ENCODE measurements at regions of chr4 and their contacts with region 1.

Region 1: DNA sequence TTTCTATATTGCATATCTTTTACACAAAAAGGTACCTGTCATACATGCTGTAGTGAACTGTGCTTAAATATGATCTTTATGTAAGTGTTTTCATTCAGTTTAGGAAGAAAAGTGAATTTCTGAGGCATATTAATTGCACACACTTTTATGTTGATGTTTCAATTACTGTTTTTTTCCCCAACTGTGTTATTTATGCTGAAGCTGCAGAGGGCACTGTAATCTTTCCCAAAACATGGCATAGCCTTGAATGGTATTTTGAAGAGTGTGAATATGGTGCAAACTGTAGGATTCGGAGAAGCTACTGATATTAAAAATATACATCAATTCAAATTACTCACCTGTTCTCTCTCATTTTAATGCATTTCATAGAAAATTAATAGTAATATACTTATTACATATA is 6.0 kb upstream of the CENPE start:
- DNase-seq: no peak
- ATAC-seq: no peak; the same call in 1 of the 2 replicates
- H3K4me3 ChIP-seq: no peak overlapping the region
- H3K27ac ChIP-seq: no peak overlapping the region
- H3K4me1 ChIP-seq: no peaks in the 10 kb centered on the region
- H3K27me3 ChIP-seq: peaks cover 4% of the 10 kb centered on the region; the same call in 1 of the 2 replicates
- CTCF ChIP-seq: peak; percentile 37
- POLR2A ChIP-seq: no peak
- RAD21 ChIP-seq: peak; percentile 40; the same call in 1 of the 2 replicates

Region 2: DNA sequence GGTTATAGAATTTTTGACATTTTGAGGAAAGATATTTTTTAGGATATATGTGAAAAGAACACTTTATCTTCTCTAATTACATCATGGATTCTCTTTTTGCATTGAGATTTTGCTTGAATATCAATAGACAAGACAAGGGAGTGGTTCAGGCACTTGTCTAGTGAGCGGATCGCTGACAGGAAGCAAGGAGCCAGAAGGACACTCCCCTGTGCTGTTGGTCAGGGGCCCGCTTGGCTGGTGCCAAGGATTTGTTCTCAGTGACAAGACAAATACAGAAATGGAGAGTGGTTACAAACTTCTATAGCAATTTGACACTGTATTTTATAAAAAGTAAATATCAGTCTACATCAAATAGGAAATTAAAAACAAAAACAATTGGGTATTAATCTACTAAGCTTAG is 244.6 kb before region 1 on chr4:
- CTCF ChIA-PET with region 1: no interaction called
- POLR2A ChIA-PET with region 1: no interaction called
- dilution Hi-C with region 1: no loop called
- in situ Hi-C with region 1: no loop called
- intact Hi-C with region 1: no loop called
- DNase-seq: no peak
- ATAC-seq: no peak
- H3K4me3 ChIP-seq: no peak overlapping the region
- H3K27ac ChIP-seq: no peak overlapping the region
- H3K4me1 ChIP-seq: no peaks in the 10 kb centered on the region
- H3K27me3 ChIP-seq: no peaks in the 10 kb centered on the region
- CTCF ChIP-seq: no peak
- POLR2A ChIP-seq: no peak
- RAD21 ChIP-seq: no peak

Region 3: DNA sequence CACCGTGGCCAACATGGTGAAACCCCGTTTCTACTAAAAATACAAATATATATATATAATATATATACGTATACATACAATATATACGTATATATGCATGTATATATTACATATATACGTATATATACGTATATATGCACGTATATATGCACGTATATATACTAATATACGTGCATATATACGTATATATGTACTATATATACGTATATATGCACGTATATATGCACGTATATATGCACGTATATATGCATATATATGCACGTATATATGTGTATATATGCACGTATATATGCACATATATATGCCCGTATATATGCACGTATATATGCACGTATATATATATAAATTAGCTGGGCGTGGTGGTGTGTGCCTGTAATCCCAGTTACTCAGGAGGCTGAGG is 528.3 kb after region 1 on chr4:
- CTCF ChIA-PET with region 1: no interaction called
- POLR2A ChIA-PET with region 1: no interaction called
- dilution Hi-C with region 1: no loop called
- in situ Hi-C with region 1: no loop called
- intact Hi-C with region 1: no loop called
- DNase-seq: no peak
- ATAC-seq: no peak
- H3K4me3 ChIP-seq: no peak overlapping the region
- H3K27ac ChIP-seq: no peak overlapping the region
- H3K4me1 ChIP-seq: no peaks in the 10 kb centered on the region
- H3K27me3 ChIP-seq: no peaks in the 10 kb centered on the region
- CTCF ChIP-seq: no peak
- POLR2A ChIP-seq: no peak
- RAD21 ChIP-seq: no peak

Region 4: GRCh38 chr4:103934178-103934789 is 730.2 kb after region 1 on chr4:
- CTCF ChIA-PET with region 1: no interaction called
- POLR2A ChIA-PET with region 1: no interaction called
- dilution Hi-C with region 1: no loop called
- in situ Hi-C with region 1: loop called (anchors 25 kb)
- intact Hi-C with region 1: loop called (anchors 2 kb)
- DNase-seq: peak; percentile 28
- ATAC-seq: no peak; the same call in 1 of the 2 replicates
- H3K4me3 ChIP-seq: no peak overlapping the region
- H3K27ac ChIP-seq: no peak overlapping the region
- H3K4me1 ChIP-seq: no peaks in the 10 kb centered on the region
- H3K27me3 ChIP-seq: no peaks in the 10 kb centered on the region
- CTCF ChIP-seq: peak; percentile 58
- POLR2A ChIP-seq: no peak
- RAD21 ChIP-seq: peak; percentile 37

Region 5: DNA sequence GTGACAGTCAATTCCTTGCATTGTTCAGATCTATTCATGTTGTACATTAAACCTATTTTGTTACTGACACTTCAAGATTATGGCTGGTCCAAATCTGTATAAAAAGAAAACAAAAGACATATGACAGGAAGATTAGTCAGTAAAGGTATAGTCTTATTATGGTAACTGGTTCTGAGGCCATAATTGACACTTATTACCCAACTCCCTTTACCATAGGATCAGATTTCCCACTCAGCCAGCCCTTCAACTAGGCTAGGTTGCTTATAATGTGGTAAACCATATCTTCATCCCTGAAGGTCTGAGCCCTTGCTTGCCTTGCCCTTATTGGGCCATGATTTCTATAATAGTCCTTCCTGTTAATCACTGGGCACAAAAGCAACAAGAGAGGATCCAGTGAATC is 1001.0 kb after region 1 on chr4:
- CTCF ChIA-PET with region 1: no interaction called
- POLR2A ChIA-PET with region 1: no interaction called
- dilution Hi-C with region 1: no loop called
- in situ Hi-C with region 1: no loop called
- intact Hi-C with region 1: loop called (anchors 5 kb)
- DNase-seq: no peak
- ATAC-seq: no peak
- H3K4me3 ChIP-seq: no peak overlapping the region
- H3K27ac ChIP-seq: no peak overlapping the region
- H3K4me1 ChIP-seq: no peaks in the 10 kb centered on the region
- H3K27me3 ChIP-seq: no peaks in the 10 kb centered on the region
- CTCF ChIP-seq: no peak
- POLR2A ChIP-seq: no peak
- RAD21 ChIP-seq: no peak

Region 6: DNA sequence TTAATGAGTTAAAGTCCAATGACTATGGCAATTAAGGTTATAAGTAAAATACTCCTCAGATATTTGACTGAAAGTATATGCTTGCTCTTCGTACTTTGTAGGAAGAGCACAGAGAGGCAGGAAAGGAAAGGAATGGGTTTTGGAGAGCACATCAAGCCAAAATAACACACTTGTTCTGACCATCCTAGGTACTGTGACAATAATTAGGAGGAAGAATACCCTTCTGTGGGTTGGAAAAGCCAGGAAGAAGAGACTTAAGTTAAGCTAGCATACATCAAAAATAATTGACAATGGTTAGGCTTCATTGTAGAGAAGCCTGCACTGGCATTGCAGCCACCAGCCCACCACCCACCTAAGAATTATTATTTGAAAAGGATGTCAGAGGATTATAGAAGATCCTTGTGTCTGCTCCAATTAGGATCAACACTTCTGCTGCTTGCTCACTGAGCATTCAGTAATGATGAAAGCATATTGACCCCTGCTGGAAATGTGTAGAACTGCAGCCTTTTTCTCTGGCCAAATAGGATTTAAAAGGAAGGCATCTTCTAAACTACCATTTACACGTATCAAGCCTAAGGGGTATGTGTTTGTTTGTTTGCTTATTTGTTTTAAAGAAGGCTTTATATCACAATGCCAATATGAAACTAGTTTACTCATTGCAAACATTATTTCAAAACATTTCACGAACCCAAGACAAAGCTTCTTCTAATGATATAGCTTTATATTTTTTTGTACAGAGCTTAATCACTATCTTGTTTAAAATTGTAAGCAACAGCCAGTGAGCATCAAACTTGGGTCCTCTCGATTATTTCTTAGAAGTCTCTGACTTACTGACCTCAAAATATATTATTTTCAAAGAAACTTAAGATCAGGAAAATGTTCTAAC is 1656.4 kb after region 1 on chr4:
- CTCF ChIA-PET with region 1: no interaction called
- POLR2A ChIA-PET with region 1: no interaction called
- dilution Hi-C with region 1: no loop called
- in situ Hi-C with region 1: loop called (anchors 25 kb)
- intact Hi-C with region 1: loop called (anchors 5 kb)
- DNase-seq: peak; percentile 63
- ATAC-seq: peak; percentile 82
- H3K4me3 ChIP-seq: no peak overlapping the region
- H3K27ac ChIP-seq: no peak overlapping the region
- H3K4me1 ChIP-seq: no peaks in the 10 kb centered on the region
- H3K27me3 ChIP-seq: no peaks in the 10 kb centered on the region
- CTCF ChIP-seq: peak; percentile 71
- POLR2A ChIP-seq: no peak
- RAD21 ChIP-seq: peak; percentile 69

Measured in IMR-90 (cell line).